Left ventricle myocardium superior (tissue), 1 donor: ENCODE measurements at regions of chr7 and their contacts with region 1.

Region 1: GRCh38 chr7:87199700-87200450 is 19.7 kb downstream of the TMEM243 start:
- DNase-seq: no peak
- ATAC-seq: peak; percentile 56

Region 2: DNA sequence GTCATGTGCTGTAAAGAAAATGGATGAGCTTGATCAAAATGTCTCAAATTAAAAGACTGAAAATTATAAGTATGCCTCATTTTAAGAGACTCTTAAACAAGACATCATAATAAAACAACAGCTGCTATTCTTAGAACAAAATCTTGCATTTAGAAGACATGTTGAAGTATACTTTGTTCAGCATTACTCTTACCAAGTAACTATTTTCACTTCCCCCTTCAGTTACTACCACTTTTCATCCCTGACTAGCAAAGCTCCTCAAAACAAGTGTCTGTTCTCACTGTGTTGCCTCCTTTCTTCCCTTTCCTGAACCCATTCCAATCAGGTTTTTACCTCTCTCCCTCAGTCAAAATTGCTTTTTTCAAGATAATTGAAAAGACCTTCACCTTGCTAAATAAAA is 172.0 kb before region 1 on chr7:
- intact Hi-C with region 1: no loop called
- DNase-seq: no peak
- ATAC-seq: no peak

Region 3: GRCh38 chr7:87219545-87220025 is 19.7 kb after region 1 on chr7 and contains the start of gene TMEM243:
- intact Hi-C with region 1: loop called (anchors 2 kb)
- DNase-seq: peak; percentile 88
- ATAC-seq: peak; percentile 92
- total RNA-seq, gene TMEM243: 4.3 TPM